Left ventricle myocardium superior (tissue), 1 donor: ENCODE measurements at regions of chr4 and their contacts with region 1.

Region 1: GRCh38 chr4:81405894-81406401 is 65.8 kb downstream of the RASGEF1B start:
- DNase-seq: no peak
- ATAC-seq: peak; percentile 84

Region 2: DNA sequence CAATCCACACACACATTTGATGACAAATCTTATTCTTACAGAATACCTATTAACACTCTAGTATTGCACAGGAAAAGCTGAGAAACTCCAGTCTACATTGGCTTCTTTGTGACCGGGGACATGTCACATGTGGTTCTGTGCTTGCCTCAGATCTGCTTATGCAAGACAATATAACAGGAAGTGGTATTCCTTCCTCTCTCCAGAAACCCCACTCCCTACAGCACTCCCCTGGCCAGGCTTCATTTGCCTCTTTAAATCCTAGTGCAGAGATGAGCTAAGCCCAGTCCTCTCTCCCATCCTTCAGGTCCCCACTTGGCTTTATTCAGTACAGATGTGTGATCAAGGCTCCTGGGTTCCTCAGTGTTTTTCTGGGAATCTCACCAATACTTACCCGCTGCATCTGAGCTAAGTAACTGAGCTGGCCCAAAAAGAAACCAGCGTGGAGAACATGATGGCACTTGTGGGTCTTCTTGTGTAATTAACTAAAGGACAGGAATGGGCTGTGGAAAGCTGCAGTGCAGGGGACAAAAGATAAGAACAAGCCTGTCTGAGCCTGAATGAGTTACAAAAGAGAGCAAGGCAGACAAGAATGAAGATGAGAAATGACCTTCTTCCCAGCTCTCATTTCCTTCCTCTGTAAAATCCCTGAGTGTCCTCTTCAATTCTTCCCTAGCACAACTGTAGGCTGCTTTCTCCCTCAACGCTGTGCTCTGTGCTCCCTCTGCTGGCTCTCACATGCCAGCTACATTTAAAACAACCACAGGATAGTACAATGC is 862.3 kb after region 1 on chr4:
- intact Hi-C with region 1: loop called (anchors 5 kb)
- DNase-seq: peak; percentile 51
- ATAC-seq: peak; percentile 98